AG04450 (cell line): ENCODE measurements at regions of chr1 and their contacts with region 1.

Region 1: DNA sequence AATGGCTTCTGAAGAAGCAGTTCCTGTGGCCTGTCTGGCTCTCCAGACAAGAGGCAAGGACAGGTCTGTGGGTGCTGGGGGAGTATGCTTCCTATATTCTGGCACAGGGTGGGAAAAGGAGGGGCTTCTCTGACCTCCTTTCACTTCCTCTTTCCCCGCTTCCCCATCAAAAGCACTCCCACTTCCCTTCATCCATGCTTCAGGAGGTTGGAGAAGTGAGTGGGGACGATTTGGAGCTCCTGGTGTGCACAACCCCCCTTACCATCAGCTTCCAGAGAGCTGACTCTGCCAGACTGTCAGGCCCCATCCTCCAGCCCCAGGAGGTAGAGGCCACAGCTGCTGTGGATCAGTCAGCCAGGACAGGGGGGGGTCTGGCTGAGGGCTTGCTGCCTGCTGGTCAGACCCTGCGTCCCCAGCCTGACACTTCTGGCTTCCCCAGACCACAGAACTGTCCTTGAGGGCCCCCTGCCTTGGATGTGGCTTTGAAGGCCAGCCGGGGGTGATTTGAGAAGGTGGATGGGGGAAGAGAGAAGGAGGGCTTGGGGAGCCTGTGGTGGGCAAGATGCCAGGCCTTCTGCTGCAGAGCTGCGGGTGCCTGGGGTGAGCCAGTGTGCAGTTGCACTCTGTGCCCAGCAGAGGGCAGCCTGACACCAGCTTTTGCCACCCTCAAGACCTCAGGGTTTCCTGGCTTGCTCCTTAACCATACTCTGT is 21.5 kb upstream of the TMEM222 start:
- DNase-seq: peak; percentile 93
- H3K4me3 ChIP-seq: peak overlapping the region; percentile 29; the same call in 1 of the 2 replicates
- H3K27ac ChIP-seq: peak overlapping the region; percentile 97
- H3K27me3 ChIP-seq: no peaks in the 10 kb centered on the region
- CTCF ChIP-seq: peak; percentile 96

Region 2: GRCh38 chr1:27097484-27097917 is 203.0 kb before region 1 on chr1:
- CTCF ChIA-PET with region 1: interaction called, 23 read pairs
- POLR2A ChIA-PET with region 1: interaction called, 8 read pairs
- DNase-seq: peak; percentile 44
- H3K4me3 ChIP-seq: no peak overlapping the region
- H3K27ac ChIP-seq: no peak overlapping the region
- H3K27me3 ChIP-seq: no peaks in the 10 kb centered on the region
- CTCF ChIP-seq: peak; percentile 97

Region 3: DNA sequence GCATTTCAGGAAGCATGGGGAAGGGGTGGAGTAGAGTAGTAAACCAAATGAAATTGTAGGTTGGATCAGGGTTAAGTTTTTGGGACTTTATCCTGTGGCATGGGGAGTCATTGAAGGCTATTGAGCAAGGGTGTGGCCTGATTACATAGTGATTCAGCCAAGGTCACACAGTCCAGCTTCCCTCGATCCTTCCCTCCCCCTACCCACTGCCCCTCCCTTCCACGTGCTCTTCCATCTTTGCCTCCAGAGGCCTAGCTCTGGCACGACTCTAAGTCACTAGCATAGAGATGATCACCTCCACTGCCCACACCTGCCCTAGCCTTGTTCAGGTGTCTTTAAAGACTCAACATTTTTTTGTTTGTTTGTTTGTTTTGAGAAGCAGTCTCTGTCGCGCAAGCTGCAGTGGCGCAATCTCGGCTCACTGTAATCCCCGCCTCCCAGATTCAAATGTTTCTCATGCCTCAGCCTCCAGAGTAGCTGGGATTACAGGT is 108.4 kb before region 1 on chr1:
- CTCF ChIA-PET with region 1: interaction called, 19 read pairs
- POLR2A ChIA-PET with region 1: no interaction called
- DNase-seq: no peak
- H3K4me3 ChIP-seq: no peak overlapping the region
- H3K27ac ChIP-seq: no peak overlapping the region
- H3K27me3 ChIP-seq: no peaks in the 10 kb centered on the region
- CTCF ChIP-seq: no peak

Region 4: DNA sequence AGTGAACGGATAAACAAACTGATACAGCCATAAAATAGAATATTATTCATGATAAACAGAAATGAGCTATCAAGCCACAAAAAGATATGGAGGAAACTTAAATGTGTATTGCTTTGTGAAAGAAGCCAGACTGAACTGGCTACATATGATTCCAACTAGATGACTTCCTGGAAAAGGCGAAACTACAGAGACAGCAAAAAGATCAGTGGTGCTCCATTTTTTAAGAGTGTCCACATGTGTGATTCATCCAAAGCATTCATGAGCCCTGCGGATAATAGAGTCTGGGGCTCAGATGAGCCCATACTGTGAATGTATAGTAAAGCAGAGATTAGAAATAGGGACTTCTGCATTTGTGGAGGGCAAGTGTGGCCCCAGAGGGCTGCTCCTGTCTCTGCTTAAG is 13.7 kb after region 1 on chr1:
- CTCF ChIA-PET with region 1: interaction called, 21 read pairs
- POLR2A ChIA-PET with region 1: interaction called, 15 read pairs
- DNase-seq: no peak
- H3K4me3 ChIP-seq: no peak overlapping the region
- H3K27ac ChIP-seq: no peak overlapping the region
- H3K27me3 ChIP-seq: no peaks in the 10 kb centered on the region
- CTCF ChIP-seq: no peak

Region 5: DNA sequence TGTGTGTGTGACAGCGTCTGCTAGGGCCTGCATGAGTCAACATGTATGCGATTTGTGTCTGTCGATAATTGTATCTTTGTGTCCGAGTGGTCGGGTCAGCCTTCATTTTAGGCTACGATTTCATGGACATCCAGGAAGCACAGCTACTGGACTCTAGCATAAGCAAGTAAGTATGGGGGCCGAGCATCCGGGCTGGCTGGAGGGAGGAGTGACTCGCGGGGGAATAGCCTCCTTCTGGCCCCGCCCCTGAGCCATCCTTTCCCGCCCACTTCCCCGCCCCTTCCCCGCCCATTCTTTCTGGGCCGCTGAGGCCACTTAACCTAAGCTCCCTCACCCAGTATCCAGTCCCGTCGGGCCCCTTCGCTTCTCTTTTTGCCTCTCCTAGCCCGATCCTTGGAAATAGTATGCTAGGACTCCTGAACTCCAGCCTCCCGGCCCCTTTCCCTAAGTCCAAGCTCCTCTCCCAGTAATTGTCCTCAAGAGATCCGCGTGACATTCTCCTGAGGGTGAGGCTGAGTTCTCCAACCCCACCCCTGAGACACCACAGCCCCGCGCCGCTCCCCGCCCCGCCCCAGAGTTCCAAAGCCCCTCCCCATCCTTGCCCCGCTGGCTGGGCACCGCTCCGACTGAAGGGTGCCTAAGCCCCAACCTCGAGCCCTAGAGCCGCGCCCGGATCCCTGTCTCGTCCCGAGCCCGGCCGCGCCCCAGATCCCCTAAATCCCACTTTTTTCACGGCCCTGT is 65.0 kb after region 1 on chr1:
- CTCF ChIA-PET with region 1: interaction called, 75 read pairs
- POLR2A ChIA-PET with region 1: interaction called, 27 read pairs
- DNase-seq: peak; percentile 67
- H3K4me3 ChIP-seq: peak overlapping the region; percentile 74
- H3K27ac ChIP-seq: peak overlapping the region; percentile 90
- H3K27me3 ChIP-seq: no peaks in the 10 kb centered on the region
- CTCF ChIP-seq: no peak

Region 6: DNA sequence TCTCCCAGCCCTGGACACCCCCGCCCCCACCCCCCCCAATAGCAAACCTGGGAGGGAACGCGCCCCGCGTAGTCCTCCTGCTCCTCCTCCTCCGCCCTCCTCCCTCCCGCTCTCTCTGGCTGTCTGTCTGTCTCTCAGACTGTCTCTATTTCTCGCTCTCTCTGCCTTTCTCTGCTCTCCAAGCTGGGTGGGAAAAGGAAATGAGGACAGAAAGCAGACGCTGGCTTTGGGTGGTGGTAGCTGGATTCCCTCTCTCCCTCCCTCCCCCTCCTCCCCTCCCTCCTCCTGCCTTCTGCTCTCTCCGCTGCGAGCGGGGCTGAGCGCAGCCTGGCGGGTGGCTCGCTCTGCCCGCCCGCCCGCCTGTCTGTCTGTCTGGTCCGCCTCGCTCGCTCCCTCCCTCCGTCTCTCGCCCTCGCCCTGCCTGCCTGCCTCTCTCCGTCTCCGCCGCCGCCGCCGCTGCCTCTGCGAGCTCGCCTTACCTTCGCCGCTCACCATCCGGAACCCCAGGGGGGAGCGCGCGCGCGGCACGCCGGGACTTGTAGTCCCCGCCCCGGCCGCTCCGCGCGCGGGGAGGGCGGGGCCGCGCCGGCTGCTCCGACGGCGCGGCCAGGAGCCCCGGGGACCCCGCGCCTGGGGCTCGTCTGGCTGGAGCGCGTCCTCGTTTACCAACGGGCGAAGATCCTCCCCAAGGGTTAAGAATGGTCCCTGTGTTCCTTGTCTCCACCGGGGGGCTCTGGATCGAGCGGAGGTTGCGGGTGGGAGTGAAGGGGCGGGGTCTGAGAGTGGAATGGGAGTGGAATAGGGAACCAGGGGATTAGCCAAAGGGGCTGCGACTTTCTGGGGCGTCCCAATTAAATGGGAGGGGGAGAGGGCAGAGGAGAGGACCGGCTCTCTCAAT is 303.4 kb after region 1 on chr1 and contains the start of gene AHDC1:
- CTCF ChIA-PET with region 1: interaction called, 80 read pairs
- POLR2A ChIA-PET with region 1: interaction called, 8 read pairs
- DNase-seq: peak; percentile 61
- H3K4me3 ChIP-seq: peak within 1 kb of the TSS; percentile 88
- H3K27ac ChIP-seq: peak within 1 kb of the TSS; percentile 21
- H3K27me3 ChIP-seq: no peaks in the 10 kb centered on the region
- CTCF ChIP-seq: no peak
- polyA plus RNA-seq, gene AHDC1: 2.8 and 3.0 TPM in 2 replicates